ENCODE measurements at regions of chr1 and their contacts with region 1.

Region 1: DNA sequence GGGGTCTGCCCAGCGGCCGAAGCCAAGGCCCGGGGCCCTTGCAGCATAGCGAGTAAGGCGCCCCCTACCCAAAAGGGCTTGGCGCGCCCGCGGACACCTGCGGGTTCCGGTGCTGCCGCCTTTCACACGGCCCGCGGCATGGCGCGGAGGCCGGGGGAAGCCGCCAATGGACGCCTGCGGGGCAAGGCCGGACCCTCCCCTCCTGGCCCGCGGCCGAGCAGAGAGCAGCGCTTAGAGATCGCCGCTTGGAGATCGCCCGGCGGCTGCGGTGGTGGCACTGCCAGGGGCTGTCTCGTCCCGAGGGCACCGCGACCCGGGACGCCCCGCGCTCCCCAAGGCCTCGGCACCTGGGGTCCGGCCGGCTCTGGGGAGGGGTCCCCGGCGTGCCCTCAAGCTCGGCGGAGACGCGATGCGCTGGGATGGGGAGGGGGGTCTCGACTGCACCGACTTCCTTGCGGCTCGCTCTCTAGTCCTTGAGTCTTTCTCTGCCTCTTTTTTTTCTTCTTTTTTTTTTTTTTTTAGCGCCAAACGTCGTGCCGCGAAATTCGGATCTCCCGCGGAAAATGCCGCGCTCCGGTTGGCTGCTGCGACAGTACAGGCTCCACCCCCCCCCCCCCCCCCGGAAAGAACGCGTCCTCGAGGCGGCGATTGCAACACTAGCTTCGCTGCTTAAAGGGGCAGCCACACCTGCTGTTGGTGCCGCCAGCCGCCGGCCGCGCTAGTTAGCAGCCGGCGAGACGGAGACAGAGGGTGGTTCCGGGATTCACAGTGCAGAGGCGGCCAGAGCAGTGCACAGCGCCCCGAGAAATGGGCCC is at the start of gene E2F2:
- DNase-seq: peak; percentile 97
- H3K4me3 ChIP-seq: peak within 1 kb of the TSS; percentile 84
- H3K27ac ChIP-seq: peak within 1 kb of the TSS; percentile 98
- H3K4me1 ChIP-seq: peaks cover 67% of the 10 kb centered on the region
- CTCF ChIP-seq: peak; percentile 60; the same call in 1 of the 2 replicates
- total RNA-seq, gene E2F2: 176 and 203 TPM in 2 replicates

Region 2: GRCh38 chr1:23496490-23497181 is 34.3 kb before region 1 on chr1:
- CTCF ChIA-PET with region 1: interaction called, 6 read pairs
- POLR2A ChIA-PET with region 1: interaction called, 35 read pairs
- intact Hi-C with region 1: no loop called
- DNase-seq: no peak
- H3K4me3 ChIP-seq: no peak overlapping the region
- H3K27ac ChIP-seq: no peak overlapping the region
- H3K4me1 ChIP-seq: peaks cover 21% of the 10 kb centered on the region
- CTCF ChIP-seq: no peak

Region 3: GRCh38 chr1:23577056-23578004 is 46.4 kb after region 1 on chr1:
- CTCF ChIA-PET with region 1: interaction called, 3 read pairs
- POLR2A ChIA-PET with region 1: interaction called, 22 read pairs
- intact Hi-C with region 1: no loop called
- DNase-seq: peak; percentile 92
- H3K4me3 ChIP-seq: peak overlapping the region; percentile 69
- H3K27ac ChIP-seq: peak overlapping the region; percentile 97
- H3K4me1 ChIP-seq: peaks cover 97% of the 10 kb centered on the region
- CTCF ChIP-seq: no peak

Region 4: GRCh38 chr1:23619299-23620188 is 88.6 kb after region 1 on chr1:
- CTCF ChIA-PET with region 1: interaction called, 3 read pairs
- POLR2A ChIA-PET with region 1: interaction called, 35 read pairs
- intact Hi-C with region 1: no loop called
- DNase-seq: peak; percentile 97
- H3K4me3 ChIP-seq: peak overlapping the region; percentile 69
- H3K27ac ChIP-seq: peak overlapping the region; percentile 99
- H3K4me1 ChIP-seq: peaks cover 95% of the 10 kb centered on the region
- CTCF ChIP-seq: no peak

Region 5: GRCh38 chr1:24526940-24527542 is 996.1 kb after region 1 on chr1:
- CTCF ChIA-PET with region 1: no interaction called
- POLR2A ChIA-PET with region 1: no interaction called
- intact Hi-C with region 1: loop called (anchors 10 kb)
- DNase-seq: peak; percentile 57
- H3K4me3 ChIP-seq: no peak overlapping the region
- H3K27ac ChIP-seq: no peak overlapping the region
- H3K4me1 ChIP-seq: peaks cover 62% of the 10 kb centered on the region
- CTCF ChIP-seq: peak; percentile 93

Measured in OCI-LY7 (cell line).